Activated CD4-positive, alpha-beta memory T cell treated with anti-CD3 and anti-CD28 coated beads for 36 hours (primary cell): ENCODE measurements at regions of chr11 and their contacts with region 1.

Region 1: GRCh38 chr11:66045177-66045639 is 3.8 kb downstream of the GAL3ST3 start:
- DNase-seq: peak; percentile 88
- H3K4me3 Mint-ChIP-seq: peak overlapping the region; percentile 42
- H3K27ac Mint-ChIP-seq: peak overlapping the region; percentile 82
- H3K4me1 Mint-ChIP-seq: peaks cover 21% of the 10 kb centered on the region
- H3K27me3 Mint-ChIP-seq: peaks cover 5% of the 10 kb centered on the region

Region 2: DNA sequence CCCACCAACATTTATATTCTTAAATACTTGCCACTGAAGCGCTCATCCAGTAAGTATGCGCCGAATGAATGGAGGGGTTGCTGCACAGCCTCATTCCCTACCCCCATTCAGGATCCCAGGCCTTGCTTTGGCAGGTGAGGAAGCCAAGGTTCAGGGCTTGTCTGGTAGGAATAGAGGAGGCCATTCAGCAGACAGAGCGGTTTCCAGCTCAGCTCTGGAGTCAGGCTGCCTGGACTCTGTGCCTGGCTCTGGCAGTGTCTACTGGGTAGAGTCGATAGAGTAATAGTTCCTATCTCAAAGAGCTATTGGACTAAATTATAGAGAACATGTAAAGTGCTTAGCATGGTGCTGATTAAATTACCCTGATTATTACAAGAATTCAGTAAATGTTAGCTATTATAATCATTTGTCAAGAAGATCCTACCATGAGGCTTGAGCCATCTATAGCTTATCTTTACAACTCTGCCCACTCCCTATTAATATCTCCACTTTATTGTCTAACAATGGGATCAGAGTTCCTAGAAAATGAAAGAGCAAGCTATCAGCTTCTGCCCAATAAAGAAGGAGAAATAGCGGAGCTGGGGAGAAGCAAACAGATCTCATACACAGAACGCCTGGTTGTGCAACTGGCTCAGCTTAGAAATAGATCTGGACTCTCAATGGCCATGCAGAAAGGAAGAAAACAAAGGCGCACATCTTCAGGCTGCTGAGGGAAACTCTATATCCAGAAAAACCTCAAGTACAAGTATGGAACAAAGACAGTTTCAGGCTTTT is 218.1 kb before region 1 on chr11:
- CTCF ChIA-PET with region 1: no interaction called
- POLR2A ChIA-PET with region 1: no interaction called
- intact Hi-C with region 1: no loop called
- DNase-seq: no peak
- H3K4me3 Mint-ChIP-seq: no peak overlapping the region
- H3K27ac Mint-ChIP-seq: peak overlapping the region; percentile 18
- H3K4me1 Mint-ChIP-seq: peaks cover 19% of the 10 kb centered on the region
- H3K27me3 Mint-ChIP-seq: no peaks in the 10 kb centered on the region

Region 3: GRCh38 chr11:66011239-66011784 is 33.9 kb before region 1 on chr11:
- CTCF ChIA-PET with region 1: interaction called, 10 read pairs
- POLR2A ChIA-PET with region 1: no interaction called
- intact Hi-C with region 1: no loop called
- DNase-seq: no peak
- H3K4me3 Mint-ChIP-seq: no peak overlapping the region
- H3K27ac Mint-ChIP-seq: no peak overlapping the region
- H3K4me1 Mint-ChIP-seq: peaks cover 2% of the 10 kb centered on the region
- H3K27me3 Mint-ChIP-seq: peaks cover 21% of the 10 kb centered on the region

Region 4: DNA sequence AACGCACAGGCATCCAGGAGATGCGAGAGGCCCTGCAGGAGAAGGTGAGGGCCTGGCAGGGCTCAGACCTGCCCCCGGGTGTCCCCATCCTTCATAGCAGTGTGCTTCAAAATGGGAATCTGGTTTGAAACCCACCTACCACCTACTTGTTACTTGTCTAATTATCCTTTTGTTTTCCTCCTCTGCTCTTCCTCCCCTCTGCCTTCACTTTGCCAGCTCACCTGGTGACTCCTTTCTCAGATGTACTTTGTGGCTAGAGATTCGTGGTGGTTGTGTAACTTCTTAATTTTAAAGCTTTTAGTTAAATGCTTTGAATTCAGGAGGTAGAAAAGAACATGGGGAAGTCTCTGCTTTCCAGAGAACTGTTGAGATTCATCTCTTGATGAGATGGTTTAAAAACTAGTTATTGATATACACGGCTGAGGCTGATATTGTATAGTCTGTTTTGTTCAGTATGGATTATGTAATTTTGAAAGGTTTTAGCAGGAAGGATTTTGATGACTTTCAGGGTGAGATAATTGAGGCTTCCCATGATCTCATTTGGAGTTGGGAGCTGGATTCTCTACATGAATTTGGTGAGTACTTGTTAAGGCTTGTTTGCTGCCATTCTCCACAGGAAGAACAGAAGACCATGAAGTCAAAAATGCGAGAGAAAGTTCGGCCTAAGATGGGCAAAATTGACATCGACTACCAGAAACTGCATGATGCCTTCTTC is 14.9 kb after region 1 on chr11:
- CTCF ChIA-PET with region 1: interaction called, 26 read pairs
- POLR2A ChIA-PET with region 1: interaction called, 4 read pairs
- intact Hi-C with region 1: no loop called
- DNase-seq: no peak
- H3K4me3 Mint-ChIP-seq: no peak overlapping the region
- H3K27ac Mint-ChIP-seq: peak overlapping the region; percentile 83
- H3K4me1 Mint-ChIP-seq: peaks cover 55% of the 10 kb centered on the region
- H3K27me3 Mint-ChIP-seq: no peaks in the 10 kb centered on the region

Region 5: DNA sequence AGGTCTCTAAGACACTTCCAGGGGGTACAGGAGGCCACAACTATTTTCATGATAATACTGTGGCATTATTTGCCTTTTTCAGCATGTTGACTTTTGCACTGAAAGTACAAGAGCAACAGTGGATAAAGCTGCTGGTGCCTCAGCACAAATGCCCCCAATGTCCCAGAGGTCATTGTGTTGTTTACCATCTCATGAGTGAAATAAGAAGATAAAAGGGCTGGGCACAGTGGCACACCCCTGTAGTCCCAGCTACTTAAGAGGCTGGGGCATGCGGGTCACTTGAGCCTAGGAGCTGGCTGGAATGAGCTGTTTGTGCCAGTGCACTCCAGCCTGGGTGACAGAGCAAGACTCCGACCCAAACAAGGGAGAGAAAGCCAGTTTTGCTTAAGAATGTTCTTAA is 150.7 kb after region 1 on chr11:
- CTCF ChIA-PET with region 1: no interaction called
- POLR2A ChIA-PET with region 1: no interaction called
- intact Hi-C with region 1: no loop called
- DNase-seq: no peak
- H3K4me3 Mint-ChIP-seq: no peak overlapping the region
- H3K27ac Mint-ChIP-seq: no peak overlapping the region
- H3K4me1 Mint-ChIP-seq: no peaks in the 10 kb centered on the region
- H3K27me3 Mint-ChIP-seq: no peaks in the 10 kb centered on the region